Activated T-helper 1 cell treated with anti-CD3 and anti-CD28 coated beads, Interleukin-12 subunit alpha, Interleukin-12 subunit beta, Interleukin-2, Interleukin-4 antibody, amounts not matched to agents 30 ng/mL and 10 ng/mL and 1 ng/mL, durations not matched to agents 14 hours and 24 hours and 36 hours (primary cell): ENCODE measurements at regions of chr14 and their contacts with region 1.

Region 1: DNA sequence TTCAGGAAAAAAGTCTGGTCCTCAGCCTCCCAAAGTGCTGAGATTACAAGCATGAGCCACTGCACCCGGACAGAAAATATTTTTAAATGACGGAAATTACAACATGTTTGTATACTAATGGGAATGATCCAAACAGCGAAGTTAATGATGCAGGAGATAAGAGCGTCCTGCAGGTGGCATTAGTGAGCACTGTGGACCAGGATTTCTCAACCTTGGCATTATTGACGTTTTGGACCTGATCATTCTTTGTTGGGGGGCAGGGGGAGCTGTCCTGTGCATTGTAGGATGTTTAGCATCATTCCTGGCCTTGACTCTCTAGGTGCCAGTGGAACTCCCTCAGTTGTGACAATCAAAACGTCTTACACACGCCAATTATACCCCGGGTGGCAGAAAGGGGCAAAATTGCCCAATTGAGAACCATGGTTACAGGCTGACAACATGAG is 34.1 kb downstream of the SCFD1 start:
- DNase-seq: no peak
- H3K4me3 Mint-ChIP-seq: no peak overlapping the region
- H3K27ac Mint-ChIP-seq: no peak overlapping the region
- H3K4me1 Mint-ChIP-seq: no peaks in the 10 kb centered on the region
- H3K27me3 Mint-ChIP-seq: no peaks in the 10 kb centered on the region

Region 2: GRCh38 chr14:30621940-30622830 is 34.0 kb before region 1 on chr14 and contains the start of gene SCFD1:
- intact Hi-C with region 1: loop called (anchors 2 kb)
- DNase-seq: peak; percentile 94
- H3K4me3 Mint-ChIP-seq: peak within 1 kb of the TSS; percentile 99
- H3K27ac Mint-ChIP-seq: peak within 1 kb of the TSS; percentile 98
- H3K4me1 Mint-ChIP-seq: peaks cover 56% of the 10 kb centered on the region
- H3K27me3 Mint-ChIP-seq: no peaks in the 10 kb centered on the region
- total RNA-seq, gene SCFD1: 73.1 and 77.3 TPM in 2 replicates

Region 3: GRCh38 chr14:30906752-30907658 is 250.8 kb after region 1 on chr14:
- intact Hi-C with region 1: loop called (anchors 1 kb)
- DNase-seq: no peak
- H3K4me3 Mint-ChIP-seq: no peak overlapping the region
- H3K27ac Mint-ChIP-seq: no peak overlapping the region
- H3K4me1 Mint-ChIP-seq: no peaks in the 10 kb centered on the region
- H3K27me3 Mint-ChIP-seq: no peaks in the 10 kb centered on the region

Region 4: GRCh38 chr14:31360919-31361662 is 704.9 kb after region 1 on chr14:
- intact Hi-C with region 1: loop called (anchors 5 kb)
- DNase-seq: no peak
- H3K4me3 Mint-ChIP-seq: no peak overlapping the region
- H3K27ac Mint-ChIP-seq: no peak overlapping the region
- H3K4me1 Mint-ChIP-seq: no peaks in the 10 kb centered on the region
- H3K27me3 Mint-ChIP-seq: no peaks in the 10 kb centered on the region

Region 5: GRCh38 chr14:32560209-32560857 is 1904.1 kb after region 1 on chr14:
- intact Hi-C with region 1: loop called (anchors 10 kb)
- DNase-seq: peak; percentile 5
- H3K4me3 Mint-ChIP-seq: no peak overlapping the region
- H3K27ac Mint-ChIP-seq: no peak overlapping the region
- H3K4me1 Mint-ChIP-seq: peaks cover 17% of the 10 kb centered on the region
- H3K27me3 Mint-ChIP-seq: no peaks in the 10 kb centered on the region